ENCODE measurements at regions of chr10 and their contacts with region 1.

Region 1: GRCh38 chr10:86710987-86711512 is 42.7 kb downstream of the LDB3 start:
- DNase-seq: peak; percentile 78 to 92
- ATAC-seq: peak; percentile 91 to 93 (median 92)
- H3K4me3 ChIP-seq: peak overlapping the region; percentile 50
- H3K4me3 Mint-ChIP-seq: peak overlapping the region; percentile 86
- H3K27ac ChIP-seq: peak overlapping the region; percentile 83
- H3K27ac Mint-ChIP-seq: peak overlapping the region; percentile 81 to 93
- H3K4me1 ChIP-seq: peaks cover 22% of the 10 kb centered on the region
- H3K4me1 Mint-ChIP-seq: peaks cover 25 to 34% of the 10 kb centered on the region in 2 donors
- H3K27me3 ChIP-seq: no peaks in the 10 kb centered on the region
- H3K27me3 Mint-ChIP-seq: no peaks in the 10 kb centered on the region
- CTCF ChIP-seq: peak; percentile 79

Region 2: DNA sequence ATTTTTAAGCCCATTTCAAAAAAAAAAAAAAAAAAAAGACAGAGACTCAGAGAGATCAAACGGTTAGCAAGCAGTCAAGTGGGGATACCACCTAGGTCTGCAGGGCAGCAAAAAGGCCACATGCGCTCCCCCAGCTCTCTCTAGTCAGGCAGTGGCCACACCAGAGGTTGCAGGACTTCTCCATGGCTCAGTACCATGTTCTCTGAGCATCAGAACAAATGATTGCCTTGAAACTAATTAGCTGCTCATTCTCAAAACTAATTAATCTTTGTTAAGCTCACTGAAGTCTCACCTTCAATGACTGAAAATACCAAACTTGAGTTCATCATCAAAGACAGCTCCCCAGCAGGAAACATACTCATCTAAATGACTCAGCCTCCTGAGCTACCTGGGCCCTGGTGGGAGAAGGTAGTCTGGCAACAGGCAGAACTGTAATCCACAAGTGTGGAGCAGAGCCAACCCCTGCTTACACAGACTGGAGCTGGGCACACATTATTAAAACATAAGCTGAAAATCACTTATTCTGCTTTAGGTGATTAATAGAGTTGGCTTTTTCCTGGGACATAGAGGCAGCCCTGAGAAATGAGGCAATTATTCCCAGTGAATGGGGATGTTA is 664.1 kb before region 1 on chr10:
- intact Hi-C with region 1: no loop called
- DNase-seq: peak in 1 of 2 donors; percentile 5
- ATAC-seq: no peak
- H3K4me3 ChIP-seq: no peak overlapping the region
- H3K4me3 Mint-ChIP-seq: no peak overlapping the region
- H3K27ac ChIP-seq: no peak overlapping the region
- H3K27ac Mint-ChIP-seq: no peak overlapping the region
- H3K4me1 ChIP-seq: no peaks in the 10 kb centered on the region
- H3K4me1 Mint-ChIP-seq: no peaks in the 10 kb centered on the region
- H3K27me3 ChIP-seq: no peaks in the 10 kb centered on the region
- H3K27me3 Mint-ChIP-seq: peaks cover 2 to 6% of the 10 kb centered on the region in 2 donors
- CTCF ChIP-seq: no peak

Region 3: DNA sequence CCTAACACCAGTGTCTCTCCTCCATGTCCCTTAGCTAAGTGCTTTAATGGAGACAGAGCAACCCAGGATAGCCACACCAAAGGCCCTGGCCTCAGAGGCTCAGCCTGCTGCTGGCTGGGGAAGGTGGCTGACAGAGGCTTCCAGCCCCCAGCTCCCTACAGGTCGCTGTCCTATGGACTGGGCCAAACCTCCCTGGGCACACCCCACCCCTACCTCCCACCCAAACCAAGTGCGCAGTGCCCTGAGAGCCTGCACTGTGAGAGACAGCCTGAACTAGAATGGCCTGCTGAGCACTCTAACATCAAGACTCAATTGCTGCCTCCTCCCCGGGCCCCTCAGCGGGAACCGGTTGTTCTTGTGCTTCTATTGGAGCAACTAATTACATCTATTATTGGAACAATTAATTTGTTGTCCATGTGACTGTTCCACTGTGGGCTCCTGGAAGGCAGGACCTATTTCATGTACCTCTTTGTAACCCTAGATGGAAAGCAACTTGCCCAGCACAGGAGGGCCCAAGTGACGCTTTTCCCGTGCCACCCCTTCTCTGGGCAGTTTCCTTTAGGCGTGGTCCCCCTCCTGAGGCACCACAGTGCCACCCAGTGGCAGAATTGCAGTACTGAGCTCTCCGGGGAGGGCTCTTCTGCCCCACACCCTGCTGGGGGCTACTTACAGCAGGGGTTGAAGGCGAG is 125.9 kb before region 1 on chr10:
- intact Hi-C with region 1: no loop called
- DNase-seq: peak; percentile 53 to 86
- ATAC-seq: peak; percentile 85 to 99 (median 88)
- H3K4me3 ChIP-seq: no peak overlapping the region
- H3K4me3 Mint-ChIP-seq: no peak overlapping the region
- H3K27ac ChIP-seq: no peak overlapping the region
- H3K27ac Mint-ChIP-seq: no peak overlapping the region
- H3K4me1 ChIP-seq: peaks cover 4% of the 10 kb centered on the region
- H3K4me1 Mint-ChIP-seq: no peaks in the 10 kb centered on the region
- H3K27me3 ChIP-seq: no peaks in the 10 kb centered on the region
- H3K27me3 Mint-ChIP-seq: peaks cover 0 to 4% of the 10 kb centered on the region in 2 donors
- CTCF ChIP-seq: peak; percentile 92

Region 4: GRCh38 chr10:86755740-86756510 is 44.9 kb after region 1 on chr10:
- intact Hi-C with region 1: loop called (anchors 1 kb)
- DNase-seq: peak; percentile 88 to 90
- ATAC-seq: peak; percentile 93 to 96 (median 94)
- H3K4me3 ChIP-seq: peak overlapping the region; percentile 61
- H3K4me3 Mint-ChIP-seq: peak overlapping the region; percentile 82
- H3K27ac ChIP-seq: no peak overlapping the region
- H3K27ac Mint-ChIP-seq: peak overlapping the region in 1 of 2 donors; percentile 87
- H3K4me1 ChIP-seq: peaks cover 14% of the 10 kb centered on the region
- H3K4me1 Mint-ChIP-seq: peaks cover 31 to 42% of the 10 kb centered on the region in 2 donors
- H3K27me3 ChIP-seq: peaks cover 14% of the 10 kb centered on the region
- H3K27me3 Mint-ChIP-seq: peaks cover 23 to 30% of the 10 kb centered on the region in 2 donors
- CTCF ChIP-seq: no peak

Region 5: DNA sequence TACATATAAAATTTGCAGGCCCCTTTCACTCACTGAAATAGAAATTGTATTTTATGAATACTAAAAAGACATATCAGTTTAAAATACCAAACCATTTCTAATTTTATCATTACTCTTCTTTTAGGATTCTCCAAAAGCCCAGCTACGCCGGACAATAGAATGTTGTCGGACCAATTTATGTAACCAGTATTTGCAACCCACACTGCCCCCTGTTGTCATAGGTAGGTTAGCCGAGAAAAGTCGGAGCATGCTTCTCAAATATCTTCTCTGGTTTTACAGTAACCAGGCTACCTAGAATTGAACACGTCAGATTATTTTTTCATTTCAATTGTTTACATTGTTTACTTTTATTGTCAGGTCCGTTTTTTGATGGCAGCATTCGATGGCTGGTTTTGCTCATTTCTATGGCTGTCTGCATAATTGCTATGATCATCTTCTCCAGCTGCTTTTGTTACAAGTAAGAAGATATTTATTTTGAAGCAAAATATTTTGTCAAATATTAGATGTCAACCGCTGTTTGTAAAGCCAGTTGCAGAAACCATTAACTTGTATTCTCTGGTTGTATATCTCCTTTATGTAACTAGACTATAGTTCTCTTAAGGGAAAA is 188.7 kb after region 1 on chr10:
- intact Hi-C with region 1: loop called (anchors 1 kb)
- DNase-seq: peak in 1 of 2 donors; percentile 69
- ATAC-seq: peak in 1 of 3 donors; percentile 66
- H3K4me3 ChIP-seq: no peak overlapping the region
- H3K4me3 Mint-ChIP-seq: no peak overlapping the region
- H3K27ac ChIP-seq: no peak overlapping the region
- H3K27ac Mint-ChIP-seq: no peak overlapping the region
- H3K4me1 ChIP-seq: no peaks in the 10 kb centered on the region
- H3K4me1 Mint-ChIP-seq: peaks cover 0 to 10% of the 10 kb centered on the region in 2 donors
- H3K27me3 ChIP-seq: no peaks in the 10 kb centered on the region
- H3K27me3 Mint-ChIP-seq: peaks cover 0 to 9% of the 10 kb centered on the region in 2 donors
- CTCF ChIP-seq: peak; percentile 65

Region 6: DNA sequence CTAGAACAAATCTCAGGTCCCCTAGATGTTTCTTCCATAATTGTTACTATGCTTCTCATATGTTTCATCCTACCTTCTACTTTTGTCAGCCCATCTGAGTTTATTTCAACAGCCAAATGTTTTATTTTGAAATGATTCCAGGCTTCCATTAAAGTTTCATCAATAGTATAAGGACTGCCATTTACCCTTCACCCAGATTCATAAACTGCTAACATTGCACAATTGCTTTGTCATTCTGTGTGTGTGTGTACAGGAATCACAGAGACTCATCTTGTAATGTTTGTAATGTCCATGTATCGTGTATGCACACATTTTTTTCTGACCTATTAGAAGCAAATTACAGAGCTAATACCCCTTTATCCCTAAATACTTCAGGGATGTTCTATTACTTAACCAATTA is 220.8 kb after region 1 on chr10:
- intact Hi-C with region 1: no loop called
- DNase-seq: no peak
- ATAC-seq: no peak
- H3K4me3 ChIP-seq: no peak overlapping the region
- H3K4me3 Mint-ChIP-seq: no peak overlapping the region
- H3K27ac ChIP-seq: no peak overlapping the region
- H3K27ac Mint-ChIP-seq: no peak overlapping the region
- H3K4me1 ChIP-seq: no peaks in the 10 kb centered on the region
- H3K4me1 Mint-ChIP-seq: no peaks in the 10 kb centered on the region
- H3K27me3 ChIP-seq: no peaks in the 10 kb centered on the region
- H3K27me3 Mint-ChIP-seq: no peaks in the 10 kb centered on the region
- CTCF ChIP-seq: no peak

Measured in natural killer cell (primary cell).